ENCODE measurements at regions of chr3 and their contacts with region 1.

Region 1: DNA sequence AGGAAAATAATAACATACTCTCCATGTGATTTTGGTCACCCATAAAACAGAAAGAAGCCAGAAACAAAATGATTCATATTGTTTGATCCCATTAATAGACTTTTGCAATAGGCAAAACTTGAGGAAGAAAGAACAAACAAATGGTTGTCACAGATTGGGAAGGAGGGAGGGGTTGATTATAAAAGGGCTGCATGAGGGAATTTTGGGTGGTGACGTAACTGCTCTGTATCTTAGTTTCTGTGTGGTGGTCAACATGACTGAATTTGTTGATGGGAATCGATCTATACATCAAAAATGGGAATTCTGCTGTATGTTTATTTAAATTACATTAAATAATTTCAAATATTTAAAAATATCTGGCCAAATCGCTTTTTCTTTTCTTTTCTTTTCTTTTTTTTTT is 86.2 kb downstream of the P3H2 start:
- DNase-seq: no peak
- ATAC-seq: no peak
- H3K4me3 ChIP-seq: no peak overlapping the region
- H3K27ac ChIP-seq: no peak overlapping the region
- H3K4me1 ChIP-seq: no peaks in the 10 kb centered on the region
- H3K27me3 ChIP-seq: no peaks in the 10 kb centered on the region

Region 2: GRCh38 chr3:189937307-189938124 is 96.9 kb before region 1 on chr3:
- intact Hi-C with region 1: no loop called
- DNase-seq: no peak
- ATAC-seq: no peak
- H3K4me3 ChIP-seq: no peak overlapping the region
- H3K27ac ChIP-seq: no peak overlapping the region
- H3K4me1 ChIP-seq: no peaks in the 10 kb centered on the region
- H3K27me3 ChIP-seq: no peaks in the 10 kb centered on the region

Region 3: GRCh38 chr3:190012314-190012782 is 22.1 kb before region 1 on chr3:
- intact Hi-C with region 1: loop called in 1 of 2 experiments (anchors 1 kb)
- DNase-seq: no peak
- ATAC-seq: no peak
- H3K4me3 ChIP-seq: no peak overlapping the region
- H3K27ac ChIP-seq: no peak overlapping the region
- H3K4me1 ChIP-seq: peaks cover 0 to 2% of the 10 kb centered on the region in 2 donors
- H3K27me3 ChIP-seq: no peaks in the 10 kb centered on the region